ENCODE measurements at regions of chr2 and their contacts with region 1.

Region 1: DNA sequence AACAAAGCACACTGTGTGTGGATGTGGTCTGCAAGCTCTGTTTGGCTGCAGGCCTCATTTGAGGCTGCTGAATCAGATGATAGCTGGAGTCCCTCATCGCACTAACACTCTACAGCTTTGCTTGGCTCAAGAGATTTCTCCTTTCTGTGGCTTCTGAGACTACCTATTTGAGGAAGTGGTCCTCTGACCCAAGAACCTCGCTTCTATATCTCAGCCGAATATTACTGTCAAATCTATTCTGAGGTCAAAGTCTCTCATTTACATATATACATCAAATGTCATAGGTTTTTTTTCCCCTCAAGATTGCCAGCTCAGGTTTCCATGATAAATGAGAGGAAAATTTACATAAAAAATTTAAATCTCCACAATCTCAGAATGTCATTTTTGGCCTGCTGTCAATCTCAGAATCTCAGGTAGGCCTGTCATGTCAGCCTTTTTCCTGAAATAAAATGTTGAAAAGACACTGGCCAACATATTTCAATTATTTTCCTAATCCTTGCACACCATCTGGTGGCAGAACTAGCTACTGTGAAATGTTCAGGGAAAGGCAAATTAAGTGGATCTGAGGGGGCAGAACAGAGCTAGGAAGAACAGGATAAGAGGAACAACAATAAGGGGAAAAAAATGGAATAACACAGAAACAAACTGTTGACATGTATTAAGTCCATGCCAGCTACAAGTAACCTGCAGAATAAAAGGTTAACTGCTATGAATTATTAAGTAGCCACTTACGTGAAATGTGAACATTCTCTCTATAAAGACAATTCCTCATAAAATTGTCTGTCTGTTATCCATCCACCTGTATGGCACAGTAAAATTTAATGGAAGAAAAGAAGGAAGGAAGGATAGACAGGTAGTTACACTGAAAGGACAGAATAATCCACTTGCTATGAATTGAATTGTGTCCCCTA is 39.3 kb downstream of the AP1S3 start:
- DNase-seq: peak; percentile 59
- ATAC-seq: peak; percentile 73
- H3K4me3 ChIP-seq: no peak overlapping the region
- H3K27ac ChIP-seq: no peak overlapping the region
- H3K4me1 ChIP-seq: peaks cover 8% of the 10 kb centered on the region
- H3K27me3 ChIP-seq: no peaks in the 10 kb centered on the region
- CTCF ChIP-seq: peak; percentile 83
- POLR2A ChIP-seq: no peak
- RAD21 ChIP-seq: peak; percentile 85

Region 2: DNA sequence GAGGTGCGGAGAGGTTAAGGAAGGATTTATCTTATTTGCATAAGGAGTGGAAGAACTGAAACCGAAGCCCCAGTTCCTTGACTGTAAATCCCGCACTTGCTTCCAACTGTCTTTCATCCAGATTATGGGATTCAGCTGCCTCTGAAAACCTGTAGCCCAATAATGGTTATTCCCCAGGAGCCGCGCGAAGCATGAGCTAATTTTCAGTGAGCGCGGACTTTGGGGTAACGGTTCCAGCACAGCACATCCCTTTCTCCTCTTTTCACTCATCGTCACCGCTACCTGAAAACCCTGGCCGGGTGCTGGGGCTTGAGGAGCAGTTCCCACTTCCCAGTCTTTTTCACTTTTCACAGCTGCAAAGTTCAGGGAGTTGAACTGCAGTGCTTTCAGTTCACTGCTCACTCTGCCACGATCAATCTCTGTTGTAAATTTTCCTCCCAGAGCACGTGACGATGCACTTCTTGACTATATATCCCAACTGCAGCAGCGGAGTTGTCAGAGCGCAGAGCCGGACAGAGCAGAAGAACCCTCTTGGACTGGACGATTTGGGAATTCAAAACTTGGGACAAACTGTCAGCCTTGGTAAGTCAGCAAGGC is 746.3 kb before region 1 on chr2 and contains the start of gene KCNE4:
- CTCF ChIA-PET with region 1: no interaction called
- POLR2A ChIA-PET with region 1: no interaction called
- dilution Hi-C with region 1: no loop called
- in situ Hi-C with region 1: no loop called
- intact Hi-C with region 1: loop called (anchors 5 kb)
- DNase-seq: peak; percentile 82
- ATAC-seq: peak; percentile 25
- H3K4me3 ChIP-seq: peak within 1 kb of the TSS; percentile 41
- H3K27ac ChIP-seq: peak within 1 kb of the TSS; percentile 68
- H3K4me1 ChIP-seq: peaks cover 27% of the 10 kb centered on the region
- H3K27me3 ChIP-seq: no peaks in the 10 kb centered on the region
- CTCF ChIP-seq: no peak
- POLR2A ChIP-seq: peak; percentile 94
- RAD21 ChIP-seq: no peak
- total RNA-seq, gene KCNE4: 6.6 and 8.3 TPM in 2 replicates

Region 3: GRCh38 chr2:223306371-223306770 is 491.7 kb before region 1 on chr2:
- CTCF ChIA-PET with region 1: interaction called, 8 read pairs
- POLR2A ChIA-PET with region 1: no interaction called
- dilution Hi-C with region 1: no loop called
- in situ Hi-C with region 1: loop called (anchors 25 kb)
- intact Hi-C with region 1: loop called (anchors 1 kb)
- DNase-seq: peak; percentile 49
- ATAC-seq: peak; percentile 64; the same call in 1 of the 2 replicates
- H3K4me3 ChIP-seq: no peak overlapping the region
- H3K27ac ChIP-seq: no peak overlapping the region
- H3K4me1 ChIP-seq: no peaks in the 10 kb centered on the region
- H3K27me3 ChIP-seq: no peaks in the 10 kb centered on the region; the same call in 1 of the 2 replicates
- CTCF ChIP-seq: peak; percentile 47
- POLR2A ChIP-seq: no peak
- RAD21 ChIP-seq: peak; percentile 56

Region 4: DNA sequence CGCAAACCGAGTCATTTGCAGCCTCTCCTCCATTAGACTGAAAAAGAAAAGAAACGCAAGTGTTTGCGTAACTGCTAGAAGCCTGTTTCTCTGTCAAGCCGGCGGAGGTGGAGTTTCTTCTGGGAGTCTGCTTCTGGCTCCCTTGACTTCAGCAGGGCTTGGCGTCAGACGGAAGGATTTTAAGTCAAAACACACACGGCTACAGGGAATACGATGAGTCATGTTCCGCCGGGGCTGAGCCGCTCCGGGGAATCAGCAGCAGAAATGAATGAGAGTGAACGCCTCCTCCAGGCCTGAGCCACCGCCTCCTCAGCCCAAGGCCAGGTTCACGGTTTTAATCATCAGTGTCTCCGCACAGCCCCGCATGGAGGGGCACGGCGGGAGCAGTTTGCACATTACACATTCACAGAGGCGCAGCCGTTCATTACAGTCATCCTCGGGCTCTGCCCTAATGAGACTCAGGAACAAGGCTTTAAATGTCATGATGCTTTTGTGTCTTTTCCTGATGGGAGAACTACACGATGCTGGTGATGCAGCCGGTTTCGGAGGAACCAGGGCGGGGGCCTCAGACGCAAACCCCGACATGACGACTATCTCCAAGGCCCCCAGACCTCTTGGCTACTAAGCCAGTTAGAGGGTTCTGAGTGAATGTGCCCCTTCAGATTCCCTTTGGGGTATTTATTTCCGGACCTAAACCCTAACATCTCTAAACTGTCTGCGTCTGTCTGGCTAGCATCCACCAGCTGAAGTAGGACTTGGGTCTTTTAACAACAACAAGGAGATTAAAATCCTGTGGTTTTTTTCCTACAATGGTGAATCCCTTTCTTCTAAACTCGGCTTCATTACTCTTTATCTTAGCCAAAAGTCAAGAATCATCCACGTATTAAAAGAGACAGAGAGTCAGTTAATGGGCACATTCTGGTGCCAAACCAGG is 184.8 kb before region 1 on chr2:
- CTCF ChIA-PET with region 1: no interaction called
- POLR2A ChIA-PET with region 1: no interaction called
- dilution Hi-C with region 1: no loop called
- in situ Hi-C with region 1: no loop called
- intact Hi-C with region 1: loop called (anchors 5 kb)
- DNase-seq: peak; percentile 99
- ATAC-seq: peak; percentile 99
- H3K4me3 ChIP-seq: peak overlapping the region; percentile 25
- H3K27ac ChIP-seq: peak overlapping the region; percentile 18
- H3K4me1 ChIP-seq: peaks cover 3% of the 10 kb centered on the region; the same call in 1 of the 2 replicates
- H3K27me3 ChIP-seq: no peaks in the 10 kb centered on the region
- CTCF ChIP-seq: peak; percentile 24; the same call in 1 of the 2 replicates
- POLR2A ChIP-seq: peak; percentile 52; the same call in 1 of the 2 replicates
- RAD21 ChIP-seq: no peak; the same call in 1 of the 2 replicates

Region 5: DNA sequence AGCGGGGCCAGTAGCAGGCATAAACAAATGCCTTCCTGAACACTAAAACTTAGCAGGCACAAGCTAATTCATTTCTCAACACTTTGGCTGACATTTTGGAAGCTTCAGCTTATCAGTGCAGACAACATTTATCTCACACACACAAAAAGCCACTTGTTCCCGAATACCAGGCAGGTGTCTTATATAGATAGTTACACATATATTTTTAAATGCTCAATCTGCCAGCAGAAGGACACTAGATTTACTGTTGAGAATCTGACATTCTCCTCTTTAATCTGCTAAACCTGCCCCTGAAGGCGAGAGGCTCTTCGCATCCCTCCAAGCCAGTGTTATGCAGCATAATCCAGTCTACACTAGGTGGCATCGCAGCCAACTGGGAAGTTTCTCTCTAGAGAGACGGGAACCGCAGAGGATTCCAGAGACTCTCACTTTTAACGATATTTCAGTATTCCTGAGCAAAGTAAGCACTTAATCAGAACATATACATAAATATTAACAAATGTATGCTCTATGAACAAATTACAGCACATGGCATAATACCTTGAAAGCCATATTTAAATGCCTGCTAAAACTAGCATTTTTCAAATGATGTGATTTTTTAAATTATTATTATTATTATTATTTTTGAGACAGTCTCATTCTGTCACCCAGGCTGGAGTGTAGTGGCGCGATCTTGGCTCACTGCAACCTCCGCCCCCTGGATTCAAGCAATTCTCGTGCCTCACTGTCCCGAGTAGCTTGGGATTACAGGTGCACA is 105.7 kb before region 1 on chr2:
- CTCF ChIA-PET with region 1: interaction called, 6 read pairs
- POLR2A ChIA-PET with region 1: no interaction called
- dilution Hi-C with region 1: no loop called
- in situ Hi-C with region 1: loop called (anchors 5 kb)
- intact Hi-C with region 1: loop called (anchors 1 kb)
- DNase-seq: peak; percentile 67
- ATAC-seq: peak; percentile 92
- H3K4me3 ChIP-seq: no peak overlapping the region
- H3K27ac ChIP-seq: no peak overlapping the region
- H3K4me1 ChIP-seq: peaks cover 6% of the 10 kb centered on the region
- H3K27me3 ChIP-seq: no peaks in the 10 kb centered on the region
- CTCF ChIP-seq: peak; percentile 80
- POLR2A ChIP-seq: no peak
- RAD21 ChIP-seq: peak; percentile 81

Region 6: GRCh38 chr2:223760838-223761502 is 37.1 kb before region 1 on chr2:
- CTCF ChIA-PET with region 1: no interaction called
- POLR2A ChIA-PET with region 1: no interaction called
- dilution Hi-C with region 1: no loop called
- in situ Hi-C with region 1: no loop called
- intact Hi-C with region 1: no loop called
- DNase-seq: peak; percentile 89
- ATAC-seq: peak; percentile 95
- H3K4me3 ChIP-seq: no peak overlapping the region
- H3K27ac ChIP-seq: no peak overlapping the region
- H3K4me1 ChIP-seq: peaks cover 6% of the 10 kb centered on the region
- H3K27me3 ChIP-seq: no peaks in the 10 kb centered on the region
- CTCF ChIP-seq: no peak
- POLR2A ChIP-seq: no peak
- RAD21 ChIP-seq: no peak

Region 7: GRCh38 chr2:223774193-223774592 is 23.9 kb before region 1 on chr2:
- CTCF ChIA-PET with region 1: no interaction called
- POLR2A ChIA-PET with region 1: no interaction called
- dilution Hi-C with region 1: no loop called
- in situ Hi-C with region 1: no loop called
- intact Hi-C with region 1: no loop called
- DNase-seq: no peak
- ATAC-seq: no peak
- H3K4me3 ChIP-seq: no peak overlapping the region
- H3K27ac ChIP-seq: no peak overlapping the region
- H3K4me1 ChIP-seq: no peaks in the 10 kb centered on the region
- H3K27me3 ChIP-seq: no peaks in the 10 kb centered on the region
- CTCF ChIP-seq: no peak
- POLR2A ChIP-seq: no peak
- RAD21 ChIP-seq: no peak

Region 8: DNA sequence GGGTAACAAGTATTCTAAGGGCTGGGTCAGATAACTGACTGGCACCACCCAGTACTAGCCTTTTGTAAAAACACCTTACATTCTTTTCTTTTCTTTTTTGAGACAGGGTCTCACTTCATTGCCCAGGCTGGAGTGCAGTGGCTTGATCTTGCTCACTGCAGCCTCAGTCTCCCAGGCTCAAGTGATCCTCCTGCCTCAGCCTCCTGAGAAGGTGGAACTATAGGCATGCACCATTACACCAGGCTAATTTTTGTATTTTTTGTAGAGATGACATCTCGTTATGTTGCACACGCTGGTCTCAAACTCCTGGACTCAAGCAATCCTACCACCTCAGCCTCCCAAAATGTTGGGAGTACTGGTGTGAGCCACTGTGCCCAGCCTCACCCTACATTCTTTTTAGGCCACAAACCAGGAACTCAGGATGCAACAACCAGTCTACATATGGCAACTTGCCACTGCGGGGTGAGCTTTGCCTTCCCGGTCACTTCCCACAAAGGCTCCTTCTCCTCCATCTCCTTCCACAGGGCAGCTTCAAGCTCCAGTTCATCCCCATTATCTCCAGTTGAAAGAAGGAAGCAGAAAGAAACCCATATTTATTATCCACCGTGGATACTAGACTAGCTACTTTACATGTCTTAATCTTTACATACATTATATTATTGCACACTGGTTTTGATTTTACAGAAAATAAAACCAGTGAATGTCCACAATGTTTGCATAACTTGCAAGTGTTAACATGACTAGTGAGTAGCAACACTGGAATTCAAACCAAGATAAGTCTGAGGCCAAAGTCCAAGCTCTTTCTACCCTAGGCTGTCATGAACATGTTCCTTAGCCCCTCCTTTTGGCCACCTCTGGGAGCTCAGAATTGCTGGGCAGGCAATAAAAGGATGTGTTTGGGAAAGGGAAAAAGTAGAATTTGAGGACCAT is 63.0 kb after region 1 on chr2:
- CTCF ChIA-PET with region 1: no interaction called
- POLR2A ChIA-PET with region 1: no interaction called
- dilution Hi-C with region 1: no loop called
- in situ Hi-C with region 1: no loop called
- intact Hi-C with region 1: loop called (anchors 2 kb)
- DNase-seq: peak; percentile 77
- ATAC-seq: peak; percentile 87
- H3K4me3 ChIP-seq: no peak overlapping the region
- H3K27ac ChIP-seq: peak overlapping the region; percentile 57; the same call in 1 of the 2 replicates
- H3K4me1 ChIP-seq: peaks cover 8% of the 10 kb centered on the region
- H3K27me3 ChIP-seq: no peaks in the 10 kb centered on the region
- CTCF ChIP-seq: no peak
- POLR2A ChIP-seq: no peak
- RAD21 ChIP-seq: no peak